Common myeloid progenitor, CD34-positive (primary cell): ENCODE measurements at regions of chr7 and their contacts with region 1.

Region 1: DNA sequence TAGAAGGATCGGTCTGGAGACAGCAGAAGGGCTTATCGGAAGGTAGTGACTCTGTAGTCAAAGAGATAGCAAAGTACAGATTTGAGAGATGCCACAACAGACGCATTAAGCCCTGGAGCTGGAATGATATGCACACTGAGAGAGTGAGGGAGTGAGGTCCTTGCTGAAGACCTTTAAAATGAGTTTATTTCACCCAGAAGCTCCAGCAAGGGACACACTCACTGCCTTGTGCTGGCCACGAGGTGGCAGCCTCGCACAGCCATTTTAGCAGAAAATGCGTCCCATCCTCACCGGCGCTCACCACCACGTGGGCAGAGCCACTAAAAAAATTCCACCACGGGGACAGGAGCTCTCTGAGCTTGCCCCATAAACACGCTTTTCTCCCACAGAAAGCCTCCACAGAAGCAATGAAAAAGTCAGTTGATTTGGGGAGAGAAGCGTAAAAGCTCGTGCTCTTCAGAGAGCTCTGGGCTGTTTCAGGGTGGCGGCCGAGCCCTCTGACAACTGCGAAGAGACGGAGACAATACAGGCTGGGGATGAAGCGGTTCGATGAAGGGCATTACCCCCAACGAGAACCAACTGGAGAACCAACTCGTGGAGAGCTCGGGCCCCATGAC is 163.0 kb upstream of the KLF14 start:
- DNase-seq: peak; percentile 83 to 91 (median 88)
- H3K4me3 ChIP-seq: no peak overlapping the region
- H3K27ac ChIP-seq: no peak overlapping the region
- H3K4me1 ChIP-seq: peaks cover 0 to 28% (median 12%) of the 10 kb centered on the region in 4 experiments
- H3K27me3 ChIP-seq: no peaks in the 10 kb centered on the region

Region 2: GRCh38 chr7:130912862-130913631 is 16.0 kb after region 1 on chr7:
- CTCF ChIA-PET with region 1: interaction called, 88 read pairs
- POLR2A ChIA-PET with region 1: interaction called, 5 read pairs
- DNase-seq: peak; percentile 89 to 98 (median 98)
- H3K4me3 ChIP-seq: peak overlapping the region; percentile 32 to 98 (median 76)
- H3K27ac ChIP-seq: peak overlapping the region; percentile 91 to 92
- H3K4me1 ChIP-seq: peaks cover 27 to 82% (median 51%) of the 10 kb centered on the region in 4 experiments
- H3K27me3 ChIP-seq: no peaks in the 10 kb centered on the region

Region 3: GRCh38 chr7:130935564-130936157 is 38.7 kb after region 1 on chr7:
- CTCF ChIA-PET with region 1: interaction called, 14 read pairs
- POLR2A ChIA-PET with region 1: no interaction called
- DNase-seq: no peak
- H3K4me3 ChIP-seq: no peak overlapping the region
- H3K27ac ChIP-seq: no peak overlapping the region
- H3K4me1 ChIP-seq: peaks cover 0 to 6% (median 6%) of the 10 kb centered on the region in 4 experiments
- H3K27me3 ChIP-seq: no peaks in the 10 kb centered on the region

Region 4: DNA sequence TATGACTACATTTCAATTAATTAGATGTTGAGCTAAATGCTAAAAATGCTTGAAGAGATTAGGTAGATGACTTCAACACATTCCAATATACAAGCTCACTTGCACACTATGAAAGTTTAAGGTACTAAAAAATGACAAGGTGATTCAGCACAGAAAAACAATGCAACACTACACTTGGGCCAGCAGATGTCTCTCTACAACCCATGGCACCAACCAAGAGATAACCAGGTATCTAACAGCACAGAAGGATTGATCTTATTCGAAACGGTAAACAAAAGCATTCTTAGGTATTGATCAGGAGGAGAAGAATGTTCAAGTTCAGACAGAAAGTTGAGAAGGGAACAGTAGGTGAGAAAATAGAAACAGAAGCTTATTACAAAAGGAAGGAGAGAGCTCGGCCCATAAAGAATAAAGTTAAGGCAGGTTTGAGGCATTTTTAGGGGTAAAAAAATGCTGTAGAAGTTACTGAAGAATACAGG is 85.2 kb after region 1 on chr7:
- CTCF ChIA-PET with region 1: interaction called, 58 read pairs
- POLR2A ChIA-PET with region 1: no interaction called
- DNase-seq: peak; percentile 67 to 73 (median 72)
- H3K4me3 ChIP-seq: peak overlapping the region in 1 of 7 experiments; percentile 42
- H3K27ac ChIP-seq: peak overlapping the region; percentile 30 to 56
- H3K4me1 ChIP-seq: peaks cover 18 to 43% (median 30%) of the 10 kb centered on the region in 4 experiments
- H3K27me3 ChIP-seq: no peaks in the 10 kb centered on the region

Region 5: GRCh38 chr7:131027287-131027773 is 130.3 kb after region 1 on chr7:
- CTCF ChIA-PET with region 1: interaction called, 12 read pairs
- POLR2A ChIA-PET with region 1: no interaction called
- DNase-seq: peak in 2 of 3 donors; percentile 86 to 87
- H3K4me3 ChIP-seq: no peak overlapping the region
- H3K27ac ChIP-seq: peak overlapping the region; percentile 27 to 50
- H3K4me1 ChIP-seq: peaks cover 5 to 51% (median 25%) of the 10 kb centered on the region in 4 experiments
- H3K27me3 ChIP-seq: no peaks in the 10 kb centered on the region

Region 6: DNA sequence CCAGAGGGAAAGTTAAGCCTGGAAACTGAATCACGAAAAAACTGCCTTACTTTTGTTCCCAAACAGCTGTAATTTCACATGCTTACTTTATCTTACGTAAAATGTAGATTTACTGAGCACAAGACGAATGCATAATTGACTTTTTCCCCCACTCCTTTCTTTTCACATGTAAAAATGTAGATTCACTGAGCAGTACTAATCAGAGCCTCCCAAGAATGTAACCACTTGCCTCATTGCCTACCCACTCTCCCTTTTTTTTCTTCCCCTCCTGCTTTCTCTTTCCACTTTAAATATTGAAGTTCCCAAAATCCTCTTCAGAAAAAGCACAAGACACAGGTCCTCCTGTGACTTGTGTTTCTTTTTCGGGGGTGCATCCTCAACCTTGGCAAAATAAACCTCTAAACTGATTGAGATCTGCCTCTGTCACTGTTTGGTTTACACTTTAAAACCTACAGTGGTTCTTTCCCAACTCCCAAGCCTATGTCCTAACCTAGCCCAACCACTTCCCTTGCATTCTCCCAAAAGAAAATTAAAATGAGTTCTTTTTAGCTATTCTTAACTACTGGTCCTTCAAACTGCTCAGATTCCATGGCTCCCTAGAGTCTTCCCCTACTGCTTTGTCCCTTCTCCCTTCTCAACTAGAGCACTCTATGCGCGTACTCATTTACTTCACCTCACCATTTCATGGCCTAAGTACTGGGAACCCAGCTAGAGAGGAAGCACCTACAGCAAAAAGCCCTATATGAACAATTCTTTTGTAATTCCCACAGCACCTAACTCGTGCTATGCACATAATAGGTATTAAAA is 194.1 kb after region 1 on chr7:
- CTCF ChIA-PET with region 1: no interaction called
- POLR2A ChIA-PET with region 1: no interaction called
- DNase-seq: no peak
- H3K4me3 ChIP-seq: no peak overlapping the region
- H3K27ac ChIP-seq: no peak overlapping the region
- H3K4me1 ChIP-seq: peaks cover 0 to 7% (median 0%) of the 10 kb centered on the region in 4 experiments
- H3K27me3 ChIP-seq: no peaks in the 10 kb centered on the region